H1 (cell line): ENCODE measurements at regions of chr11 and their contacts with region 1.

Region 1: GRCh38 chr11:78715639-78716311 is 141.1 kb upstream of the NARS2 start:
- DNase-seq: peak; percentile 69 to 86
- H3K4me3 ChIP-seq: no peak overlapping the region
- H3K27ac ChIP-seq: no peak overlapping the region
- H3K4me1 ChIP-seq: no peaks in the 10 kb centered on the region
- H3K27me3 ChIP-seq: no peaks in the 10 kb centered on the region
- CTCF ChIP-seq: peak; percentile 96 to 100 (median 98)
- EP300 ChIP-seq: no peak
- POLR2A ChIP-seq: no peak
- RAD21 ChIP-seq: peak; percentile 87 to 91

Region 2: DNA sequence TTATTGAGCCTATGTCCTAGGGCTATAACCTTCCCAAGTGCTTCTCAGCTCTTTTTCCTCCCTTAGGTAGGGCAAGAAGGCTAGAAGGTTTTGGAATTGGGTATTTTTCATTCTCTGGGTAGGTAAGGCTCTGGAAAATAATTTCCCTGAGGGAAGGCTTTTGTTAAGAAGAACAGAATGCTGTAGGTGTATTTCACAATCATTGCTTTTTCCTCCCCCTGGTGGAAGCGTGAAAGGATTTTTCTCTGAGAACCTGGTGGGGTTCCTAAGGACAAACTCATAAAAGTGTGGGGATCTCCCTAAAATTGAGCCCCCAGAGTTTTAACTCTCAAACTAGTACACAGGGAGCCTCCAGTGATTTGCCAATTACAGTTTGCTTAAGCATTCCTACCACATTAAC is 100.1 kb before region 1 on chr11:
- CTCF ChIA-PET with region 1: no interaction called
- POLR2A ChIA-PET with region 1: no interaction called
- DNase-seq: no peak
- H3K4me3 ChIP-seq: no peak overlapping the region
- H3K27ac ChIP-seq: no peak overlapping the region
- H3K4me1 ChIP-seq: no peaks in the 10 kb centered on the region
- H3K27me3 ChIP-seq: no peaks in the 10 kb centered on the region
- CTCF ChIP-seq: no peak
- EP300 ChIP-seq: no peak
- POLR2A ChIP-seq: no peak
- RAD21 ChIP-seq: no peak; a peak in 1 of 4 replicates

Region 3: GRCh38 chr11:78651923-78652842 is 63.6 kb before region 1 on chr11:
- CTCF ChIA-PET with region 1: interaction called, 314 read pairs
- POLR2A ChIA-PET with region 1: interaction called, 7 read pairs
- DNase-seq: peak in 1 of 2 experiments; percentile 28
- H3K4me3 ChIP-seq: no peak overlapping the region
- H3K27ac ChIP-seq: no peak overlapping the region
- H3K4me1 ChIP-seq: peaks cover 0 to 2% (median 0%) of the 10 kb centered on the region in 4 experiments; a peak in 1 of 7 replicates
- H3K27me3 ChIP-seq: no peaks in the 10 kb centered on the region; a peak in 1 of 7 replicates
- CTCF ChIP-seq: no peak
- EP300 ChIP-seq: no peak
- POLR2A ChIP-seq: no peak
- RAD21 ChIP-seq: no peak

Region 4: DNA sequence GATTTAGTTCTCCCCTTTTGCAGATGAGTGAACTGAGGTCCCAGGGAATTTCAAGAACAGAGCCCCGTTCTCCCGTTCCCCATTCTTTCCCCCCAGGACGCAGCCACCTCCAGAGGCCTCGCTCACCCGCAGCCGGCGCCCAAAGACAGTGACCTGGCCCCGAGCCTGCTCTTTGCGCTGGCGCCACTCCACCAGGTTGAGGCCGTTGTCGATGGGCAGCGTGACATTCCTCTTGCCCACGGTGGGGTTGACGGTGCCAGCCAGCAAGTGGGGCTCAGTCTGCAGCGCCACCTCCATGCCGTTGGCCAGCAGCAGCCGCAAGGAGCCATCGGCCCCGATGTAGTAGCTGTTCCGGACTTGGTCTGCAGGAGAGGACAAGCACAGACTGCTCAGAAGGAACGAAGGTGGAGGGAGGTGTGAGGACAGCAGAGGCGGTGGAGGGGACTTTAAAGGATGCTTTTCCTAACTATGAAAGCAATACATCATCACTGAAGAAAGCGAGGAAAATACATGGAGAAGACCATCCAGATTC is 39.7 kb before region 1 on chr11:
- CTCF ChIA-PET with region 1: interaction called, 11 read pairs
- POLR2A ChIA-PET with region 1: no interaction called
- DNase-seq: no peak
- H3K4me3 ChIP-seq: no peak overlapping the region
- H3K27ac ChIP-seq: no peak overlapping the region
- H3K4me1 ChIP-seq: no peaks in the 10 kb centered on the region
- H3K27me3 ChIP-seq: no peaks in the 10 kb centered on the region
- CTCF ChIP-seq: peak in 1 of 3 experiments; percentile 8; a peak in 1 of 4 replicates
- EP300 ChIP-seq: no peak
- POLR2A ChIP-seq: no peak
- RAD21 ChIP-seq: no peak

Region 5: DNA sequence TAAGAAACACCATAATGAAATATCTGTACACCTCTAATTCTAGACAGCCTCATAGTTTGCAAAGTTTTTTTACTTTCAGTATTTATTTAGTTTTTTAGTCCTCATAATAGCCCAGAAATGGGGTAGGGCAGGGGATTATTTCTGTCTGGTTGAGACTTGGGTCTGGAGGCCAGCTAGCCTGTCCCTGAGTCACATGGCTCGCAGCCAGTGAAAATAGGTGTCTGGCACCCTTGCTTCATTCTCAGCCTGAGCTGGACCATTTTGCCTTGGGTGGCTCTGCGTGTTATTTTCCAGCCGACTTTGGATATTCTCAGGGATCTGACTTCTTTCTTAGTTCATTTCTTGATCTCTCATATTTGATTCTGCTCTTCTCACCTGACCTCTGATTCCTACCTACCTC is 17.2 kb before region 1 on chr11:
- CTCF ChIA-PET with region 1: interaction called, 84 read pairs
- POLR2A ChIA-PET with region 1: no interaction called
- DNase-seq: no peak
- H3K4me3 ChIP-seq: no peak overlapping the region
- H3K27ac ChIP-seq: no peak overlapping the region
- H3K4me1 ChIP-seq: no peaks in the 10 kb centered on the region
- H3K27me3 ChIP-seq: no peaks in the 10 kb centered on the region
- CTCF ChIP-seq: no peak
- EP300 ChIP-seq: no peak
- POLR2A ChIP-seq: no peak
- RAD21 ChIP-seq: no peak

Region 6: DNA sequence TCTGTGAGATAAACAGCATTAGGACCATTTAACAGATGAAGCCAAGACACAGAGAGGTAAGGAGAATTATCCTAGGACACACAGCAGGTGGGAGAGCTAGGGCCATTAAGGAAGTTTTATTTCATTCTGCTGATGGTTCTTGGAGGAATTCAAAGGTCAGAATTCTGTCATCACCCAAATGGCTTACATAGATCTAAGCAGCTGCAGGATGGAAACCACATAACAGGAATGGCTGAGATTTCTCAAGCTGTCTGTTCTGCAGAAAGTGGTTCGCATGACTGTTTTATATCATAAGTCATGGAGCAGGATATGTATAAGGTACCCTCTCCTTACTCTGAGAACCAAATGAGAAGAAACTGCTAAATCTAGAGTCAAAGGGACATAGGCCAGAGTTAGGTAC is 22.1 kb after region 1 on chr11:
- CTCF ChIA-PET with region 1: interaction called, 48 read pairs
- POLR2A ChIA-PET with region 1: no interaction called
- DNase-seq: no peak
- H3K4me3 ChIP-seq: no peak overlapping the region
- H3K27ac ChIP-seq: no peak overlapping the region
- H3K4me1 ChIP-seq: no peaks in the 10 kb centered on the region
- H3K27me3 ChIP-seq: no peaks in the 10 kb centered on the region
- CTCF ChIP-seq: no peak
- EP300 ChIP-seq: no peak
- POLR2A ChIP-seq: no peak
- RAD21 ChIP-seq: no peak

Region 7: DNA sequence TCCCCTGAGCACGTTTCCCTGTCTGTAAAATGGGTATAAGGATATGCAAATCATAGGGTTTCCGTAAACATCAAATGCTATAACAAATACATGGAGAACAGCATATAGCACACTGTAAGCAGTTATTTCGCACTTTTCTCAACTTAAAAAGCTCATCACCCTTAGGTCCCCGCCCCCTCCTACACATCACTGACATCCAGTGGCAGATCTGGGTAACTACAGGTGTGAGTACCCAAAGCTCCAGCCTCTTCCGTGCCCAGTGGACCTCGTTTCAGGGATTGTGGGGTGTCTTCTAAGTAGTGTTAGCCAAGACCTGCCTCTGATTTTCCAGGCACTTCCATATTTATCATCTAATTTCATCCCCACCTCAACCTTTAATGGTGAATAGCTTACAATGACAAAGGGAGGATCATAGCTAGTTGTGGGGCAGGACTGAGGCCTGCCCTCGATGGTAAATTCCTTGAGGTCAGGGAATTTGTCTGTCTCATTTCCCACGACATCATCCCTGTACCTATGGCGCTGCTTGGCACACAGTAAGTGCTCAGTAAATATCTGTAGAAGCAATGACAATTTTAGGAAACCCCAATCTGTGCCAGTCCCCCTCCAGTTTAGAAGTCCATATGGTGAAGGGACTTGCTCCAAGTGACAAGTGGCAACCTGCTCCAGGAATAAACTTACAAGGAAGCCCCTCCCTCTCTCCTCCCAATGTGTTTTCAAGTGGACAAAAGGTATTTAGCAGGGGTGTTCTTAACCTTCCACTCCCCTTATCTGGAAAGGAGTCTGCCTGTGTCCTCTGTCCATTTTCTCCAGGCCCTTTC is 384.5 kb after region 1 on chr11:
- CTCF ChIA-PET with region 1: interaction called, 16 read pairs
- POLR2A ChIA-PET with region 1: no interaction called
- DNase-seq: peak in 1 of 2 experiments; percentile 57
- H3K4me3 ChIP-seq: no peak overlapping the region
- H3K27ac ChIP-seq: no peak overlapping the region
- H3K4me1 ChIP-seq: no peaks in the 10 kb centered on the region
- H3K27me3 ChIP-seq: no peaks in the 10 kb centered on the region
- CTCF ChIP-seq: peak; percentile 65 to 80 (median 74)
- EP300 ChIP-seq: no peak
- POLR2A ChIP-seq: no peak
- RAD21 ChIP-seq: peak; percentile 88 to 90